ENCODE measurements at regions of chr5 and their contacts with region 1.

Region 1: GRCh38 chr5:68187268-68188055 is 28.1 kb upstream of the PIK3R1 start:
- DNase-seq: peak; percentile 73 to 93 (median 89)
- H3K4me3 ChIP-seq: peak overlapping the region; percentile 14 to 67 (median 45)
- H3K27ac ChIP-seq: peak overlapping the region; percentile 75 to 99 (median 96)
- H3K27me3 ChIP-seq: no peaks in the 10 kb centered on the region
- CTCF ChIP-seq: peak in 5 of 56 donors; percentile 9 to 20 (median 17)

Region 2: GRCh38 chr5:68012429-68012828 is 175.0 kb before region 1 on chr5:
- intact Hi-C with region 1: loop called in 1 of 2 experiments (anchors 10 kb)
- DNase-seq: no peak
- H3K4me3 ChIP-seq: no peak overlapping the region
- H3K27ac ChIP-seq: no peak overlapping the region
- H3K27me3 ChIP-seq: no peaks in the 10 kb centered on the region
- CTCF ChIP-seq: no peak

Region 3: DNA sequence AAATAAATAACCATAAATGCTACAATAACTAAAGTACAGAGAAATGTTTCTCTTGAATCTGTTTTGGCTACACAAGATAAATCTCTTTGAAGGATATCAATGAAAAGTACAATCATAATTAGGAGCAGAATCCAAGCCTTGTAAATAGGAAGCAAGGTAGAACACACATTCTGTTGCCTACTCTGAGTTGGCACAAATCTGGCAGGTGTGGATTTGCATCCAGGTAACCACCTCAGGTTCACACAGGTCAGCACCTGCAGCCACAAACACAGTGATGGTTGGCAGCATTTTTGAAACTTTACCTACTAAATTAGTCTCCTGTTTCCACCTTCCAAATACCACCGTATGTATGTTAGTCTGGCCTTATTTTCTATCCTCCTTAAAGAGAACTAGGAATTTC is 77.2 kb before region 1 on chr5:
- intact Hi-C with region 1: no loop called
- DNase-seq: no peak
- H3K4me3 ChIP-seq: no peak overlapping the region
- H3K27ac ChIP-seq: no peak overlapping the region
- H3K27me3 ChIP-seq: no peaks in the 10 kb centered on the region
- CTCF ChIP-seq: no peak

Region 4: GRCh38 chr5:68170826-68171558 is 16.5 kb before region 1 on chr5:
- intact Hi-C with region 1: loop called in 1 of 2 experiments (anchors 1 kb)
- DNase-seq: peak; percentile 50 to 78 (median 68)
- H3K4me3 ChIP-seq: peak overlapping the region in 48 of 59 donors; percentile 2 to 50 (median 30)
- H3K27ac ChIP-seq: peak overlapping the region; percentile 8 to 96 (median 85)
- H3K27me3 ChIP-seq: no peaks in the 10 kb centered on the region
- CTCF ChIP-seq: peak in 5 of 56 donors; percentile 10 to 32 (median 23)